ENCODE measurements at regions of chr9 and their contacts with region 1.

Region 1: GRCh38 chr9:95807326-95807947 is 68.1 kb upstream of the ERCC6L2 start:
- DNase-seq: peak; percentile 50 to 73 (median 70)
- H3K4me3 ChIP-seq: no peak overlapping the region
- H3K27ac ChIP-seq: peak overlapping the region in 1 of 2 donors; percentile 51
- H3K4me1 ChIP-seq: peaks cover 9% of the 10 kb centered on the region
- H3K27me3 ChIP-seq: no peaks in the 10 kb centered on the region
- CTCF ChIP-seq: no peak
- EP300 ChIP-seq: no peak
- POLR2A ChIP-seq: no peak

Region 2: DNA sequence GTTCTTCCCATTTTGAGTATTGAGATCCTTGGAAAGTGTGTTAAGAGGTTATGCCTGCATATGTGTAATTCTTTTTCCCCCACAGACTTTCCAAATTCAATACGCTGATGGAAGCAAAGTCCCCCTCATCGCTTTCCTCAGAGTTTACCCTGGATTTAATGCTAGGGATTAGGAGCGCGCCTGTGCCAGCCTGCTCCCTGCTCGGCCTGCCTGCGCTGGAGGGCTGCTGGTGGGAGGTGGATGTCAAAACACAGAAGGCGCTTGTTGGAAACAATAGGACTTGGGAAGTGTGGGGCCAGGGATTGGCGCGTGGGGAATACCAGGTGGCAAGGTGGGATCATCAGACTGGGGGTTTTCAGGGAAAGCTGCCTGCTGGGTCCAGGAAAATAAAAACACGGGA is 250.9 kb before region 1 on chr9:
- intact Hi-C with region 1: no loop called
- DNase-seq: no peak
- H3K4me3 ChIP-seq: no peak overlapping the region
- H3K27ac ChIP-seq: no peak overlapping the region
- H3K4me1 ChIP-seq: no peaks in the 10 kb centered on the region
- H3K27me3 ChIP-seq: no peaks in the 10 kb centered on the region
- CTCF ChIP-seq: no peak
- EP300 ChIP-seq: no peak
- POLR2A ChIP-seq: no peak

Region 3: DNA sequence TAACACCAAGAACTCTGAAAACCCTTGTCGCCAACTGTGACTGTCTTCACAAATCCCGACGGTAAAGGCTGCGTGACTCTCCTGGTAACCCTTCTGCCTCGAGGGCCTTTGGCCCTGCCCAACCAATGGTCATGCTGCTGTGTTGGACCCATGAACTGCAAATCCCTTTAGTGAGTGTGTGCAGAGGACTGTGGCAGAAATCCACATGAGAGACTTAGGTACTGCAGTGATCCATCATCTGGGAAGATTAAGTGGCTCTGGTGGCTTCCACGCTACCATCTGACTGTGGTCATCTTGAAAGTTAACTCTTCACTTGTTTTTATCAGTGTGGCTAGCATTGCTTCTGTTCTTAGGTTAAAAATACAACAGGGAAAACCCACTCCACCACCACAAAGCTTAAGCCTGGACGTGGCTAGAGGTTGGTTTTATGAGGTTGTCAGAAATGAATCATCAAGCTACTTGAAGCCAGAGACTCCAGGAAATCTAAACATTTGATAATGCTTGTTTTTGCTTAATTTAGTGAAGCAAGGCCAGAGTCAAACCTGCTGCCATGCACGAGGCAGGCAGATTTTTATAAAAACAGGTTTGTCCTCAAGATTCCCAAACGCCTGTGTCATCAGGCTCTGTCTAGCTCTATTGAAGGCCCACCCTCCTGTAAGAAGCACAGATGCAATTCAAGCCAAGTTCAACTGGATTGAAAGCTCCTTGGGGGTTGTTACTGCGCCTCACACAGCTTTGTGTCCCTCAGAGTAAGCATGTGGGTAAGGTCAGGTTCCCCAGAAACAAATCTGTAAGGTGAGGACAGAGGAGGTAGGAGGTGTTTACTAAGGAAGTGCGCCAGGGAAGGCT is 15.4 kb after region 1 on chr9:
- intact Hi-C with region 1: loop called in 1 of 4 experiments (anchors 1 kb)
- DNase-seq: no peak
- H3K4me3 ChIP-seq: no peak overlapping the region
- H3K27ac ChIP-seq: peak overlapping the region in 1 of 2 donors; percentile 32
- H3K4me1 ChIP-seq: peaks cover 9% of the 10 kb centered on the region
- H3K27me3 ChIP-seq: no peaks in the 10 kb centered on the region
- CTCF ChIP-seq: no peak
- EP300 ChIP-seq: no peak
- POLR2A ChIP-seq: no peak